ENCODE measurements at regions of chr11 and their contacts with region 1.

Region 1: GRCh38 chr11:72722050-72722748 is 30.0 kb downstream of the ARAP1 start:
- DNase-seq: peak; percentile 71 to 92 (median 91)
- ATAC-seq: peak; percentile 86
- H3K4me3 ChIP-seq: peak overlapping the region; percentile 98
- H3K4me3 Mint-ChIP-seq: peak overlapping the region; percentile 88 to 99 (median 94)
- H3K27ac ChIP-seq: peak overlapping the region; percentile 78
- H3K27ac Mint-ChIP-seq: peak overlapping the region; percentile 87 to 99 (median 96)
- H3K4me1 ChIP-seq: peaks cover 46 to 49% of the 10 kb centered on the region in 2 donors
- H3K4me1 Mint-ChIP-seq: peaks cover 50 to 80% (median 62%) of the 10 kb centered on the region in 7 donors
- H3K27me3 ChIP-seq: no peaks in the 10 kb centered on the region
- H3K27me3 Mint-ChIP-seq: no peaks in the 10 kb centered on the region

Region 2: DNA sequence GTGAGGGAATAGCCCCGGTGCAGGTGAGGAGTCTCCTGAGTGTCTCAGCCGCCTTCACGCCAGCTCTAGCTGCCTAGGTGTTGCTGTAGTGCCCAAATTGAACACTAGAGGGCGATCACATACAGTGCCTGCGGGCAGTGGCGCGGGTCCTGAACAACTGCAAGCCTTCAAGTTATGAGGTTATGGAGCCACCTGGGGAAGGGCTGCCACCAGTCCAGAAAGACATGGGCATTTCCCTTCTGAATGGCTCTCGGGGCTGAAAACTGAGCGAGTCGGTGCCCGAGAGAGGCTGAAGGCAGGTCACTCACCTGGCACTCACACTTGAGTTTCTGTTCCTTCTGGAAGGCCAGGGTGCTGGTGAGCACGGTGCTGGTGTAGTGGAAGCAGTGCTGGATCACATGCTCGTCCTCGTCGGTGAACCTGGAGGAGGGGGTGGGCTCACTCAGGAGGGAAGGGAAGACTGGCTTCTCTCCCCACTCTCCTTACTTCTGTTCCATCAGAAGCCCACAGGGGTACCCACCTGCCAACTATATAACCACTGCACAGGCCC is 136.4 kb before region 1 on chr11:
- CTCF ChIA-PET with region 1: no interaction called
- POLR2A ChIA-PET with region 1: no interaction called
- intact Hi-C with region 1: loop called in 1 of 2 experiments (anchors 1 kb)
- DNase-seq: peak; percentile 40 to 81 (median 61)
- ATAC-seq: peak; percentile 83
- H3K4me3 ChIP-seq: peak overlapping the region; percentile 72
- H3K4me3 Mint-ChIP-seq: peak overlapping the region; percentile 64 to 94 (median 90)
- H3K27ac ChIP-seq: no peak overlapping the region
- H3K27ac Mint-ChIP-seq: peak overlapping the region in 3 of 9 donors; percentile 20 to 68 (median 57)
- H3K4me1 ChIP-seq: peaks cover 15 to 22% of the 10 kb centered on the region in 2 donors
- H3K4me1 Mint-ChIP-seq: peaks cover 26 to 37% (median 36%) of the 10 kb centered on the region in 7 donors
- H3K27me3 ChIP-seq: peaks cover 0 to 3% of the 10 kb centered on the region in 2 donors
- H3K27me3 Mint-ChIP-seq: peaks cover 20 to 59% (median 35%) of the 10 kb centered on the region in 5 donors

Region 3: DNA sequence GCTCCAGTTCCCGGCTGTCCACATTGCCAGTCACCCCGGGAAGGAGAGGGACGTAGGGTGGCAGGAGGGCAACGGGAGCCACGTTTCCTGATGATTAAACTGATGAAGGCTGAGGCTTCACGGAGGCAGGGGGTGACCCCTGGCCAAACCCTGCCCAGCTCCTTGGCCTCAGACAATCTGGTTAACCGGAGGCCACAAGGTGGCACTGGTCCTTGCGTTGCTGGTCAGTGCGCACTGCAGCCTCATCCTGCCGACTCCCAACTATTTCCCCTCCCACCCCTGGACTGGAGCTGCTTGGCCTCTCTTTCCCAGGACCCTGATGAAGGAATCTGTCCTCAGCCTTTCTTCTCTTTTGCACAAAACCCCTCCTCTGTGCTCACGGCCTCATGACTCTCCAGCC is 123.3 kb before region 1 on chr11:
- CTCF ChIA-PET with region 1: no interaction called
- POLR2A ChIA-PET with region 1: no interaction called
- intact Hi-C with region 1: no loop called
- DNase-seq: no peak
- ATAC-seq: no peak
- H3K4me3 ChIP-seq: no peak overlapping the region
- H3K4me3 Mint-ChIP-seq: no peak overlapping the region
- H3K27ac ChIP-seq: no peak overlapping the region
- H3K27ac Mint-ChIP-seq: no peak overlapping the region
- H3K4me1 ChIP-seq: no peaks in the 10 kb centered on the region
- H3K4me1 Mint-ChIP-seq: peaks cover 0 to 4% (median 0%) of the 10 kb centered on the region in 7 donors
- H3K27me3 ChIP-seq: no peaks in the 10 kb centered on the region
- H3K27me3 Mint-ChIP-seq: peaks cover under 1 to 32% (median 5%) of the 10 kb centered on the region in 5 donors

Region 4: GRCh38 chr11:72752088-72752914 is 30.1 kb after region 1 on chr11 and contains the start of gene ARAP1:
- CTCF ChIA-PET with region 1: interaction called, 4 read pairs
- POLR2A ChIA-PET with region 1: interaction called, 3 read pairs
- intact Hi-C with region 1: loop called (anchors 1 kb)
- DNase-seq: peak; percentile 63 to 78 (median 71)
- ATAC-seq: peak; percentile 95
- H3K4me3 ChIP-seq: peak within 1 kb of the TSS; percentile 93
- H3K4me3 Mint-ChIP-seq: peak within 1 kb of the TSS; percentile 89 to 98 (median 96)
- H3K27ac ChIP-seq: peak within 1 kb of the TSS; percentile 81
- H3K27ac Mint-ChIP-seq: peak within 1 kb of the TSS; percentile 87 to 95 (median 93)
- H3K4me1 ChIP-seq: peaks cover 29 to 38% of the 10 kb centered on the region in 2 donors
- H3K4me1 Mint-ChIP-seq: peaks cover 35 to 55% (median 48%) of the 10 kb centered on the region in 7 donors
- H3K27me3 ChIP-seq: no peaks in the 10 kb centered on the region
- H3K27me3 Mint-ChIP-seq: no peaks in the 10 kb centered on the region
- total RNA-seq, gene ARAP1: 119 to 317 (median 156) TPM

Region 5: GRCh38 chr11:72814286-72815109 is 92.3 kb after region 1 on chr11 and contains the start of gene ATG16L2:
- CTCF ChIA-PET with region 1: interaction called, 7 read pairs
- POLR2A ChIA-PET with region 1: interaction called, 14 read pairs
- intact Hi-C with region 1: loop called (anchors 1 kb)
- DNase-seq: peak in 8 of 9 donors; percentile 53 to 96 (median 92)
- ATAC-seq: peak; percentile 89
- H3K4me3 ChIP-seq: peak within 1 kb of the TSS; percentile 89
- H3K4me3 Mint-ChIP-seq: peak within 1 kb of the TSS; percentile 97 to 99 (median 98)
- H3K27ac ChIP-seq: peak within 1 kb of the TSS; percentile 100
- H3K27ac Mint-ChIP-seq: peak within 1 kb of the TSS; percentile 86 to 99 (median 98)
- H3K4me1 ChIP-seq: peaks cover 18 to 23% of the 10 kb centered on the region in 2 donors
- H3K4me1 Mint-ChIP-seq: peaks cover 31 to 67% (median 52%) of the 10 kb centered on the region in 7 donors
- H3K27me3 ChIP-seq: no peaks in the 10 kb centered on the region
- H3K27me3 Mint-ChIP-seq: no peaks in the 10 kb centered on the region
- total RNA-seq, gene ATG16L2: 99.5 to 199 (median 166) TPM

Region 6: DNA sequence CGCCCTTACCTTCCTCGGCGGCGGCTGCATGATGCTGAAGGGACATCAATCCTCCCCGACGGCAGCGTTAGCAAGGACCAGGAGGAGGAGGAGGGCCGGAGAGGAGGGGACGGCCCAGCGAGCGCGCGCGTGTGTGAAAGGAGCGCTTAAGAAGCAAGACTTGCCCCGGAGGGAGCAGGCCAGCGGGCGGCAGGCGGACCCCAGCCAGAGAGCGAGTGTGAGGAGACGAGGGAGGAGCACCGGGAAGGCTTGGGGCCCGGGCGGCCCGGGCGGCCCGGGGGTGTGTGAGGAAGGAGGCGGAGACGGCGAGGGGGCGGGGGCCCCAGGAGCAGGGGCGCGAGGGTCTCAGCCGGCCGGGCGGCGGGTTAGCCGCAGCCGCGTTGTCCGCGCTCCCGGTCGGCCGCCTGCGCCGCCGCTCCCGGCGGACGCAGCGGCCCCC is 419.7 kb after region 1 on chr11:
- CTCF ChIA-PET with region 1: interaction called, 3 read pairs
- POLR2A ChIA-PET with region 1: interaction called, 3 read pairs
- intact Hi-C with region 1: loop called (anchors 1 to 2 kb)
- DNase-seq: peak in 4 of 9 donors; percentile 38 to 64 (median 50)
- ATAC-seq: peak; percentile 42
- H3K4me3 ChIP-seq: peak overlapping the region; percentile 87
- H3K4me3 Mint-ChIP-seq: peak overlapping the region; percentile 83 to 97 (median 94)
- H3K27ac ChIP-seq: peak overlapping the region; percentile 99
- H3K27ac Mint-ChIP-seq: peak overlapping the region; percentile 82 to 98 (median 91)
- H3K4me1 ChIP-seq: peaks cover 25 to 26% of the 10 kb centered on the region in 2 donors
- H3K4me1 Mint-ChIP-seq: peaks cover 22 to 58% (median 51%) of the 10 kb centered on the region in 7 donors
- H3K27me3 ChIP-seq: no peaks in the 10 kb centered on the region
- H3K27me3 Mint-ChIP-seq: no peaks in the 10 kb centered on the region

Region 7: GRCh38 chr11:73647459-73648100 is 925.4 kb after region 1 on chr11:
- CTCF ChIA-PET with region 1: no interaction called
- POLR2A ChIA-PET with region 1: no interaction called
- intact Hi-C with region 1: loop called in 1 of 2 experiments (anchors 5 kb)
- DNase-seq: peak; percentile 81 to 96 (median 94)
- ATAC-seq: peak; percentile 100
- H3K4me3 ChIP-seq: peak overlapping the region; percentile 62
- H3K4me3 Mint-ChIP-seq: peak overlapping the region; percentile 71 to 96 (median 92)
- H3K27ac ChIP-seq: peak overlapping the region; percentile 71
- H3K27ac Mint-ChIP-seq: peak overlapping the region; percentile 83 to 98 (median 94)
- H3K4me1 ChIP-seq: peaks cover 7 to 15% of the 10 kb centered on the region in 2 donors
- H3K4me1 Mint-ChIP-seq: peaks cover 10 to 41% (median 34%) of the 10 kb centered on the region in 7 donors
- H3K27me3 ChIP-seq: no peaks in the 10 kb centered on the region
- H3K27me3 Mint-ChIP-seq: peaks cover 0 to 8% (median 0%) of the 10 kb centered on the region in 5 donors